Activated T-helper 2 cell treated with anti-CD3 and anti-CD28 coated beads, Interferon-gamma antibody, Interleukin-2, Interleukin-4, amounts not matched to agents 10 μg/mL and 5 μg/mL and 100 μg/mL, durations not matched to agents 14 hours and 24 hours and 36 hours (primary cell): ENCODE measurements at regions of chr5 and their contacts with region 1.

Region 1: GRCh38 chr5:118987988-118988865 is at the start of gene DTWD2:
- DNase-seq: peak; percentile 90
- H3K4me3 Mint-ChIP-seq: peak within 1 kb of the TSS; percentile 77
- H3K27ac Mint-ChIP-seq: peak within 1 kb of the TSS; percentile 34
- H3K4me1 Mint-ChIP-seq: peaks cover 19% of the 10 kb centered on the region
- H3K27me3 Mint-ChIP-seq: no peaks in the 10 kb centered on the region
- total RNA-seq, gene DTWD2: 2.3 and 2.9 TPM in 2 replicates

Region 2: DNA sequence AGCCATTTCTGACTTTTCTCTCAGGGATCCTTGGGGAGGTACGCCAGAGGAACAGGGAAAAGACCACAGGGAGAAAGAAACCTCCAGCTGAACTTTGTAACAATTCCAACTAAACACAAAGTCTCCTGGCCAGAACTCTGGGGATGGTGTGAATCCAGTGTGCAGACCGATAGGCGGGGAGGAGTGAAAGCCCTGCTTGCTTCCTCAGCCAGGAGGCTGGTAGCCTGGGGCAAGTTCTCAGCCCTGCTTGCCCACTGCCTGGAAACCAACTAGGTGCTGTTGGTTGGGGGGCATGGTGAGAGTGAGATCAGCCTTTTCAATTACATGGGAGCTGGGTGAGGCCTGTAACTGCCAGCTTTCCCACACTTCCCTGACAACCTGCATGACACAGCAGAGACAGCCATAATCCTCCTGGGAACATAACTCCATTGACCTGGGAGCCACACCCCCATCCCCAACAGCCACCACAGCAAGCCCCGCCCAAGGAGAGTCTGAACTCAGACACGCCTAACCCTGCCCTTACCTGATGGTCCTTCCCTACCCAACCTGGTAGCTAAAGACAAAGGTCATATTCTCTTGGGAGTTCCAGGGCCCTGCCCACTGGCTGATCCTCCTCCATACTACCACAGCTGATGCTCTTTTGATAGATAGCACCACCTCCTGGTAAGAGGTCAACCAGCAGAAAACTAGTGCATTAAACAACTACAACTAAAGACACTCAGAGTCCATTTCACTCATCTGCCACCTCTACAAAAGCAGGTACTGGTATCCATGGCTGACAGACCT is 267.5 kb after region 1 on chr5:
- intact Hi-C with region 1: loop called (anchors 1 kb)
- DNase-seq: no peak
- H3K4me3 Mint-ChIP-seq: no peak overlapping the region
- H3K27ac Mint-ChIP-seq: no peak overlapping the region
- H3K4me1 Mint-ChIP-seq: peaks cover 9% of the 10 kb centered on the region
- H3K27me3 Mint-ChIP-seq: no peaks in the 10 kb centered on the region

Region 3: GRCh38 chr5:119309326-119309725 is 321.1 kb after region 1 on chr5:
- intact Hi-C with region 1: loop called (anchors 2 kb)
- DNase-seq: no peak
- H3K4me3 Mint-ChIP-seq: peak overlapping the region; percentile 67
- H3K27ac Mint-ChIP-seq: peak overlapping the region; percentile 96
- H3K4me1 Mint-ChIP-seq: peaks cover 88% of the 10 kb centered on the region
- H3K27me3 Mint-ChIP-seq: no peaks in the 10 kb centered on the region

Region 4: DNA sequence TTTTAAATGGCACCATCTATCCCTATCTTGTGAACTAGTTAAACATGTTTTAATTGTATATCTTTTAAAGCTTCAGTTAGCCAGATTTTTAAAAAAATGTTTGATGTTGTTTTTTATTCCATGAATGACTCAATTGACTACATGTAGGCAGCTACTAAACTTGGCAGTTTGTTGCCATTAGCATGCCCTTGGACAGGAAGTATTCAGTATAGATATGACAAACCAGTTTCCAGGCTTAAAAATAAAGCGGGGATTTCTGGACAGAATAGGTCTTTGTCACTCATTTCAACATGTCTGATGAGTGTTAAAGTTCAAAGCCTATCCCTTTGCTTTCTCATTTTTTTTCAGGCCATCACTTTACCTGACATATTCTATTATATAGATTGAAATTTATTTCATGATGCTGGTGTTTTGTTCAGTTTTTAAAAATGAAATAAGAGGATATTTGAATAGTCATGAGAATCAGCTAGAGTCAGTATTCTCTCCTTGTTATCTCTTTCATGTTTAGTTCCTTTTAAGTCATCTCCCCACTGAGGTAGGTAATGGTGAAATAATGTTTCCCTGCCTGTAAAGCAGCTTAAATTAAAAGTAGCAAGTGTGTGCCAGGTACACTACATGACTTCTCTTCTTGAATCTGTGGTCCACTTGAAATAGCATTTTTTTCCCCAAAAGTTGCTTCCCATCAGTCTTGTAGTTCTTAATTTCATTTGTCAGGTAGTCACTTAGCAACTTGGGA is 379.4 kb after region 1 on chr5:
- intact Hi-C with region 1: loop called (anchors 5 kb)
- DNase-seq: no peak
- H3K4me3 Mint-ChIP-seq: peak overlapping the region; percentile 73
- H3K27ac Mint-ChIP-seq: peak overlapping the region; percentile 92
- H3K4me1 Mint-ChIP-seq: peaks cover 74% of the 10 kb centered on the region
- H3K27me3 Mint-ChIP-seq: no peaks in the 10 kb centered on the region

Region 5: GRCh38 chr5:119435436-119436132 is 447.4 kb after region 1 on chr5:
- intact Hi-C with region 1: loop called (anchors 1 kb)
- DNase-seq: peak; percentile 48
- H3K4me3 Mint-ChIP-seq: no peak overlapping the region
- H3K27ac Mint-ChIP-seq: no peak overlapping the region
- H3K4me1 Mint-ChIP-seq: peaks cover 9% of the 10 kb centered on the region
- H3K27me3 Mint-ChIP-seq: peaks cover 18% of the 10 kb centered on the region

Region 6: GRCh38 chr5:119743927-119744326 is 755.7 kb after region 1 on chr5:
- intact Hi-C with region 1: loop called (anchors 1 kb)
- DNase-seq: no peak
- H3K4me3 Mint-ChIP-seq: no peak overlapping the region
- H3K27ac Mint-ChIP-seq: no peak overlapping the region
- H3K4me1 Mint-ChIP-seq: no peaks in the 10 kb centered on the region
- H3K27me3 Mint-ChIP-seq: no peaks in the 10 kb centered on the region